ENCODE measurements at regions of chr15 and their contacts with region 1.

Region 1: DNA sequence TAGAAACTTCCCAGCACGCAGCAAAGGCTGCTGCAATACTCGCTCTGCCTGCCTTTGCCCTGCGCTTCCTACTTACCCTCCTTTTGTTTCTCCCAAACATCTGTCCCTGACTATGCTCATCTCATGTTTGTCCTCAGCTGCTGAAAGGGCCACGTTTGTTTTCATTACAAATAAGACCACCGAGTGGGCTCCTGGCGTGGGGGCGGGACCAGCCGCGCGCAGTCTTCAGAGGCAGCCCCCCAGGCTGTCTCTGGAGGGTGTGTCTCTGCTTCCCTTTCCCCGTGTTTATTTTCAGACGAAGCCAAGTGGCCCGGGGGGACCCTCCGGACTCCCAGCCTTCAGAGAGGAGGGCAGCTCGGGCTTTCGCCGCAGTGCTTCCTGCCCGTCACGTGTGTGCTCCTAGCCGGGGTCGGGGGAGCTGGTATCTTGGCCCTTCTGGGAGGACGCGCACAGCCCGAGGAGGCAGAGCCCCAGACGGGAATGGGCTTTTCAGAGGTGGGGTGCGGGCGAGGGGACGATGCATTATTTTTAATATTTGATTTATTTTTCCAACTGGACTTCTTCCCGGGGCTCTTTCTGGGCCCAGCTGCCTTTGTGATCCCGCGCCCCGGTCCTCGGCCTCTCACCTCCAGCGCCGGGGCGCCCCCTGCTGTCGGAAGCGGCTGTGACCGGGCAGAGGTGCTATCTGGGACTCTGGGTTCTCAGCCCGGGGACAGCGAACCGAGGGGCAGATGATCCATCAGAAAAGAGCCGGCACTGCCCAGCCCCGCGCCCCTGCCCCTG is 70.0 kb upstream of the CGNL1 start:
- DNase-seq: no peak
- ATAC-seq: peak; percentile 85
- H3K4me3 ChIP-seq: peak overlapping the region; percentile 79
- H3K27ac ChIP-seq: peak overlapping the region; percentile 52
- H3K4me1 ChIP-seq: peaks cover 14% of the 10 kb centered on the region
- H3K27me3 ChIP-seq: no peaks in the 10 kb centered on the region
- CTCF ChIP-seq: peak; percentile 80 to 91 (median 89); a peak in 5 of 6 replicates
- EP300 ChIP-seq: no peak
- POLR2A ChIP-seq: no peak
- RAD21 ChIP-seq: peak; percentile 96

Region 2: DNA sequence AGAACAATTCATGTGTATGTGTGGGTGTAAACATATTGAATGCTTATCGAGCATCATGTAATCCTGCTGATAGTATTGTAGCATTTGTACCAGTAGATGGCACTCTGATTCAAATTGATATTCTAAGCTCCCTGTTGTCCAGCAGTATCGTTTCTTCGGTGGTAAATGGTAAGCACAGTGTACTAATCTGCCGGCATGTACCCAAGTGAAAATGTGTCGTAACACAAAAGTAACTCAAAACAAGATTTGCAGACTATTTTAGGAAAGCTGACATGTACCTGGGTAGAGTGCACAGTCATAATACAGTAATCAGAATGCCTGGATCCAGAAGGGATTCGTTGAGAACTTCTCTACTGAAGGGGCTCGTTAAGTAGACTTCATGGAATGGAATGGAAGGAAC is 809.7 kb before region 1 on chr15:
- CTCF ChIA-PET with region 1: interaction called, 5 read pairs
- POLR2A ChIA-PET with region 1: no interaction called
- RAD21 ChIA-PET with region 1: interaction called, 4 read pairs
- SMC1A ChIA-PET with region 1: no interaction called
- in situ Hi-C with region 1: loop called (anchors 5 kb)
- intact Hi-C with region 1: loop called (anchors 2 kb)
- DNase-seq: peak; percentile 31
- ATAC-seq: peak; percentile 95
- H3K4me3 ChIP-seq: no peak overlapping the region
- H3K27ac ChIP-seq: no peak overlapping the region
- H3K4me1 ChIP-seq: no peaks in the 10 kb centered on the region
- H3K27me3 ChIP-seq: no peaks in the 10 kb centered on the region; a peak in 1 of 4 replicates
- CTCF ChIP-seq: peak; percentile 59 to 66 (median 65); a peak in 5 of 6 replicates
- EP300 ChIP-seq: no peak
- POLR2A ChIP-seq: no peak
- RAD21 ChIP-seq: peak; percentile 81

Region 3: DNA sequence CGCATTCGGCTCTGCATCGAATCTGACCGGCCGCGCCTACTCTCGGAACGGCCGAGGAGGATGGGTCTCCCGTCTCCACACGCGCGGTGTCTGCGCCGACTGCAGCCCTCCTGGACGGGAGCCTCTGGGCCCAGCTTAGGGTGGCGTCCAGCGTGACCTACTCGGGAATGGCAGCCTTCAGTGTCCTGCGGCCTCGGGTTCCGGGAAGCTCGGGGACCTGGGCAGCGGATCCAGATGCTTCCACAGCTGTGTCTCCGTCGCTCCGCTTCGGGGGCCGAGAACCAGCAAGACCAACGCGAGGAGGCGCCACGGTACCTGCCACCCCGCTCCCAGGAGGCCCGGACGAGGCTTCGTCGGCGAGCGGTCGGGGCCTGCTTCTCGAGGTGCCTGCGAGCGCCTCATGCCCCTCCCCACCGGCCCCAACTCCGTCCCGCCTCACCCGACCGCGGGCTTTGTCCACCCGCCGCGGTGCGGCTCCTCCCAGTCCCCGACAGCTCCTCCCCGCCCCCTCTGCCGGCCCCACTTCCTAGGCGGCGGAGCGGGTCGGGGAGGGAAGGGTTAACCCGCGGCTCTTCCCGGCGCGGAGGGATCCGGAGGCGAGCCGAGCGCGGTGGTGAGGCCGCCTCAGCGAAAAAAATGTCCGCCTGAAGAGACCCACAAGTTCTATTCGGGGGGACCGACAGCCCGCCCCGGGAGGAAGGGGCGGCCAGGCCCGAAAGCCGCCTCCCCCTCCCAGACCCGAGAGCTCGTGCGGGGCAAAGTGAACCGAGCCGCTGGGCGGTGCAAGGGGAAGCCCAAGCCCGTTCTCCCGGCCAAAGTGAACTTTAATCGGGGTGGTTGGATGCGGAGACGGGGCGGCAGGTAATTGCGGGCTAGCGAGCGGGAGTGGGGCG is 388.1 kb before region 1 on chr15 and contains the start of gene TCF12:
- CTCF ChIA-PET with region 1: interaction called, 6 read pairs
- POLR2A ChIA-PET with region 1: no interaction called
- RAD21 ChIA-PET with region 1: no interaction called
- SMC1A ChIA-PET with region 1: no interaction called
- in situ Hi-C with region 1: loop called (anchors 10 kb)
- intact Hi-C with region 1: loop called (anchors 5 kb)
- DNase-seq: peak; percentile 68
- ATAC-seq: peak; percentile 88
- H3K4me3 ChIP-seq: peak within 1 kb of the TSS; percentile 86
- H3K27ac ChIP-seq: peak within 1 kb of the TSS; percentile 69
- H3K4me1 ChIP-seq: no peaks in the 10 kb centered on the region; the same call in 1 of the 2 replicates
- H3K27me3 ChIP-seq: no peaks in the 10 kb centered on the region
- CTCF ChIP-seq: peak; percentile 52 to 56 (median 53)
- EP300 ChIP-seq: no peak
- POLR2A ChIP-seq: peak; percentile 89
- RAD21 ChIP-seq: peak; percentile 60
- polyA plus RNA-seq, gene TCF12: 8.2 to 9.0 TPM

Region 4: DNA sequence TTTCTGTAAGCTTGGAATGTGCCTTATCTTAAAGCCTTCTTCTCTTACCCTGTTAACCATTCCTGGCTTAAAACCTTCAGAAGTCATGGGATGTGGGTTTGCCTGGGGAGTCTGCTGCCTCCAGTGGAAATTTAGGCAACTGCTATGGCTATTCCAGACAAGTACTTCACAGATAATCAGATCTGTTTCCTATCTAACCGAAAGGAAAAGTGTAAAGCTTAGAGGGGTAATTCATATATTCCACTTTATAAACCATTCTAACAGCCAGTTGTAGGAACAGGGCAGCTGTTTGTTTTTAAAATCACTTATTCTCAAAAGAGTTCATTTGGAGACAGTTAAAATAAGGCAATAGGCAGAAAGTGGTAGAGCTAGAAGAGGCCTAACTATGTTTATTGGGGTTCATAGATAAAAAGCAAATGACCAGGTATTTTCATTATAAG is 168.0 kb before region 1 on chr15:
- CTCF ChIA-PET with region 1: interaction called, 10 read pairs
- POLR2A ChIA-PET with region 1: no interaction called
- RAD21 ChIA-PET with region 1: interaction called, 4 read pairs
- SMC1A ChIA-PET with region 1: interaction called, 9 read pairs
- in situ Hi-C with region 1: no loop called
- intact Hi-C with region 1: no loop called
- DNase-seq: no peak
- ATAC-seq: peak; percentile 79
- H3K4me3 ChIP-seq: no peak overlapping the region
- H3K27ac ChIP-seq: no peak overlapping the region
- H3K4me1 ChIP-seq: peaks cover under 1% of the 10 kb centered on the region
- H3K27me3 ChIP-seq: no peaks in the 10 kb centered on the region
- CTCF ChIP-seq: peak; percentile 51 to 69 (median 68)
- EP300 ChIP-seq: no peak
- POLR2A ChIP-seq: no peak
- RAD21 ChIP-seq: peak; percentile 61

Region 5: DNA sequence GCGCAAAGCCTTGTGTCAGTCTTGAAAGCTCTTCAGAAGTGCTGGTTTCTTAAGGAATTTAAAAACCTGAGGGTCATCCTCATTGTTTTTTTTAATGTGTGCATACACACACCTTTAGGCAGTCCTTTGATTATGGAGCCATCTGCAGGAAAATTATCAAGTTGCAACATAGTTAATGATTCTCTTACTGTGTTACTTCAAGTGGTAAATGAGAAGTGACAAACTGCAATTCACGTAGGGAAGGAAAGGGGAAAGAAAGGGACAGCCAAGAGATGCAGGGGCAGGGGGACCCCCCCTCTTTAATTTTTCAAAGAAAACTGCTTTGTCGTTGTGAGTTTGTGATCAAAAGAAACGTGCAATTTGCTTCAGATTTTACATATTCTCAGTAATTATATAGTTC is 92.5 kb before region 1 on chr15:
- CTCF ChIA-PET with region 1: interaction called, 36 read pairs
- POLR2A ChIA-PET with region 1: no interaction called
- RAD21 ChIA-PET with region 1: interaction called, 17 read pairs
- SMC1A ChIA-PET with region 1: interaction called, 29 read pairs
- in situ Hi-C with region 1: no loop called
- intact Hi-C with region 1: no loop called
- DNase-seq: no peak
- ATAC-seq: peak; percentile 86
- H3K4me3 ChIP-seq: no peak overlapping the region
- H3K27ac ChIP-seq: no peak overlapping the region
- H3K4me1 ChIP-seq: no peaks in the 10 kb centered on the region
- H3K27me3 ChIP-seq: no peaks in the 10 kb centered on the region
- CTCF ChIP-seq: peak; percentile 42 to 67 (median 48); a peak in 5 of 6 replicates
- EP300 ChIP-seq: no peak
- POLR2A ChIP-seq: no peak
- RAD21 ChIP-seq: peak; percentile 83

Region 6: DNA sequence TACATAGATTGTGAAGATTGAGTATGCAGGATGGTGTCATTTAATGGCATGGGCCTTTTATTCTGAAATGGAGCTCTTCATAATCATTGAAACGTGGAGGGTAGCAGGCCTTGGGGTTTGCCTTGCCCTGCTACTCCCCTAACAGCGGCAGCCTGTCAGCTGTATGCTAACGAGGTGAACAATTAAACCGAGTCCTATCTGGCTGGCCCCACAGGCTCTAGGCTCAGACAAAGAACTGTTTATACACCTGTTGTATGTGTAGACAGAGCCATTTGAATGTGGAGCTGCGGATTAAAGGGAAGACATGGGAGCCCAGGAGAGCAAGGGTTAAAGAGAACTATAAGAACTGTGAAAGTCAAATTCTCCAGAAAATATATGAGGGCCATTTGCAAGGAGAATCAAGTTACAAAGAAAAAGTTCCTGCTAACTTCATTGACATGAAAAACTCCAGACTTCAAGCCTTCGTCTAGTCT is 46.7 kb before region 1 on chr15:
- CTCF ChIA-PET with region 1: interaction called, 14 read pairs
- POLR2A ChIA-PET with region 1: no interaction called
- RAD21 ChIA-PET with region 1: interaction called, 12 read pairs
- SMC1A ChIA-PET with region 1: interaction called, 16 read pairs
- in situ Hi-C with region 1: no loop called
- intact Hi-C with region 1: loop called (anchors 2 kb)
- DNase-seq: peak; percentile 13
- ATAC-seq: peak; percentile 94
- H3K4me3 ChIP-seq: no peak overlapping the region
- H3K27ac ChIP-seq: no peak overlapping the region
- H3K4me1 ChIP-seq: no peaks in the 10 kb centered on the region
- H3K27me3 ChIP-seq: no peaks in the 10 kb centered on the region
- CTCF ChIP-seq: no peak
- EP300 ChIP-seq: peak in 1 of 2 experiments; percentile 20; a peak in 1 of 4 replicates
- POLR2A ChIP-seq: no peak
- RAD21 ChIP-seq: no peak

Measured in GM12878 (cell line).